Mammary epithelial cell (primary cell): ENCODE measurements at regions of chr22 and their contacts with region 1.

Region 1: GRCh38 chr22:18001040-18001893 is 23.1 kb downstream of the MICAL3 start:
- DNase-seq: peak; percentile 95
- H3K4me3 ChIP-seq: peak overlapping the region; percentile 55 to 83 (median 79)
- H3K27ac ChIP-seq: peak overlapping the region; percentile 78
- H3K4me1 ChIP-seq: peaks cover 29% of the 10 kb centered on the region
- H3K27me3 ChIP-seq: no peaks in the 10 kb centered on the region
- CTCF ChIP-seq: peak; percentile 13 to 60

Region 2: GRCh38 chr22:17830043-17830961 is 171.0 kb before region 1 on chr22:
- CTCF ChIA-PET with region 1: no interaction called
- dilution Hi-C with region 1: no loop called
- in situ Hi-C with region 1: no loop called
- intact Hi-C with region 1: loop called (anchors 1 kb)
- DNase-seq: peak; percentile 79
- H3K4me3 ChIP-seq: no peak overlapping the region
- H3K27ac ChIP-seq: no peak overlapping the region
- H3K4me1 ChIP-seq: peaks cover 11% of the 10 kb centered on the region
- H3K27me3 ChIP-seq: no peaks in the 10 kb centered on the region
- CTCF ChIP-seq: peak; percentile 100

Region 3: DNA sequence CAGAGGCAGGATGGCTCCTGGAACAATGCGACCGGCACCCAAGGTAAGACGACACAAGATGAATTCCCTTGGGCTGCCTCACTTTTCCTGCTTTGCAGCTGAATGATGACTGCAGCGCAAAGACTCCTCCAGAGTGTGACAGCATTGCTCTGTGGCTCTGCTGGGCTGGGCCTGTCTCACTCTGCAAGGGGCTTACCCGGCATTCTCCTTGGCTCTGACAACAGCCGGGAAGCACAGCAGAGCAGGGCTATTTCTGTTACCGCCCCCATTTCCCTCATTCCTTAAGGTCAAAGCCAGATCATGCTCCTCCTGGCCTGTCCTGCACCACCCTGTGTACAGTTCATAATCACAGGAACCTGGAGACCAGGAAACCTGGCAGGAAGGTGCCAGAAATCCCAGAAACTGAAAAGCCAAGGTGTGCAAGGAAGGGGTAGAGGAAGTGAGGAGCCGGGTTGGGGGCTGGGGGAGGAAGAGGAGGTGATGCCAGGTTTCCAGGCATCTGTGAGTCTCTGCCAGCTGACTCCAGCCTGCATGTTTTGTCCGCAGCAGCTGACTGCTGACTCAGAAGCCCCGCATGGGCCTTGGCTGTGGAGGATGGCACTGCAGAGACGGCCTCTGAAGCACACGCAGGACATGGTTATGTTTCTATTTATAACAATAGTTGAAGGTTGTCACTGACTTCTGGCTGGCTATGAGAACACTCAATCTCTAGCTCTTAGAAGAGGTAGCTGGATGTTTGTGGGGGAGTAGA is 90.5 kb before region 1 on chr22:
- CTCF ChIA-PET with region 1: no interaction called
- dilution Hi-C with region 1: no loop called
- in situ Hi-C with region 1: no loop called
- intact Hi-C with region 1: loop called (anchors 1 kb)
- DNase-seq: peak; percentile 70
- H3K4me3 ChIP-seq: no peak overlapping the region
- H3K27ac ChIP-seq: peak overlapping the region; percentile 14
- H3K4me1 ChIP-seq: peaks cover 21% of the 10 kb centered on the region
- H3K27me3 ChIP-seq: no peaks in the 10 kb centered on the region
- CTCF ChIP-seq: peak; percentile 36 to 57

Region 4: DNA sequence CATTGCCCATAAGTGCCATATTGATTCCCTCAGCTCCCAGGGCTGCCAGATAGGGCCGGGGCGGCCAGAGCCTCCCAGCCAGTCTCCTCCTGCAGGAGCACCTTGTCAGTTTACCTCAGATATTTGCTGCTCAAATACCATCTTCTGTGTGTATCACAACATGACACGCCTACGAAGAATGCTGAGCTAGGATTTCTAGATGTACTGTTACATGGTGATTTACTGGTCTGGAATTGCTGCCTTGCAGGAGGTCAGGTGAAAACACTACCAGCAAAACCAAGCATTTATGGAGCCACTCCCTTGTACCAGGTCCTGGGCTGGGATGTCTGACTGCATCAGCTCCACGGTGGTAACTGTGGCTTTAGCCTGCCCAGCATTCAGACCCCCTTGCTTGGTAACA is 11.3 kb after region 1 on chr22:
- CTCF ChIA-PET with region 1: no interaction called
- dilution Hi-C with region 1: no loop called
- in situ Hi-C with region 1: no loop called
- intact Hi-C with region 1: loop called (anchors 1 kb)
- DNase-seq: peak; percentile 82
- H3K4me3 ChIP-seq: no peak overlapping the region
- H3K27ac ChIP-seq: no peak overlapping the region
- H3K4me1 ChIP-seq: peaks cover 20% of the 10 kb centered on the region
- H3K27me3 ChIP-seq: no peaks in the 10 kb centered on the region
- CTCF ChIP-seq: no peak

Region 5: DNA sequence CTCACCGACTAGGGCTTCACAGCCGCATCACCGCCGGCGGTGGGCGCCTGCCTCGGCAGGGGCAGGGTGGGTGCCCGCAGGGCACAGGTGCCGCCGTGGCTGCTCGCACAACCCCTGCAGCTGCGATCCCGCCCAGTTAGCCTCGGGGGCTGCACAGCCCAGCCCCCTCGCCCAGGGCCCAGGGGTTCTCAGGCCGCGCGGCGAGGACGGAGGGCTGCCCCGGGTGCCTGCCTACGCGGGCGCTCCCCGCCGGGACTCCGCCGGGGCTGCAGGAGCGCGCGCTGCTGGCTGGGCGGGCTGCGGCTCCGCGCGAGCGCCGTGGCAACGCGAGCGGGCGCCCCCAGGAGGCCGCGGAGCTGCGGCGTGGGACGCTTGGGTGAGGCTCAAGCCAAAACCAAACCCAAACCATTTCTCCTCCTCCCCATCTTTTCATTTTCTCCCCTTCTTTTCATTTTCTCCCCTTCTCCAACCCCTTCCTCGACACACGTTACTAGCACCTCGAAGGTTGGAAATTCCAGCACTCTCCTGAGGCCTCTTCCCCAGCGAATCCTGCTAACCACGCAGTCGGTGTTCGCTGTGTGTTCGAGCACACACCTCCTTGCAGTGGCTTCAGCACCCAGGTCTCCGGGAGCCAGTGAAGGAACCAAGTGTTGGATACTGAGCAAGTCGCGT is 23.1 kb after region 1 on chr22 and contains the start of gene MICAL3:
- CTCF ChIA-PET with region 1: no interaction called
- dilution Hi-C with region 1: no loop called
- in situ Hi-C with region 1: no loop called
- intact Hi-C with region 1: loop called (anchors 1 kb)
- DNase-seq: peak; percentile 68
- H3K4me3 ChIP-seq: peak within 1 kb of the TSS; percentile 67 to 74 (median 70)
- H3K27ac ChIP-seq: peak within 1 kb of the TSS; percentile 80
- H3K4me1 ChIP-seq: peaks cover 41% of the 10 kb centered on the region
- H3K27me3 ChIP-seq: no peaks in the 10 kb centered on the region
- CTCF ChIP-seq: peak; percentile 45 to 62
- total RNA-seq, gene MICAL3: 67.2 to 102 TPM

Region 6: GRCh38 chr22:18060646-18061620 is 59.7 kb after region 1 on chr22:
- CTCF ChIA-PET with region 1: no interaction called
- dilution Hi-C with region 1: no loop called
- in situ Hi-C with region 1: no loop called
- intact Hi-C with region 1: loop called (anchors 1 kb)
- DNase-seq: peak; percentile 90
- H3K4me3 ChIP-seq: no peak overlapping the region
- H3K27ac ChIP-seq: peak overlapping the region; percentile 57
- H3K4me1 ChIP-seq: peaks cover 70% of the 10 kb centered on the region
- H3K27me3 ChIP-seq: no peaks in the 10 kb centered on the region
- CTCF ChIP-seq: no peak

Region 7: DNA sequence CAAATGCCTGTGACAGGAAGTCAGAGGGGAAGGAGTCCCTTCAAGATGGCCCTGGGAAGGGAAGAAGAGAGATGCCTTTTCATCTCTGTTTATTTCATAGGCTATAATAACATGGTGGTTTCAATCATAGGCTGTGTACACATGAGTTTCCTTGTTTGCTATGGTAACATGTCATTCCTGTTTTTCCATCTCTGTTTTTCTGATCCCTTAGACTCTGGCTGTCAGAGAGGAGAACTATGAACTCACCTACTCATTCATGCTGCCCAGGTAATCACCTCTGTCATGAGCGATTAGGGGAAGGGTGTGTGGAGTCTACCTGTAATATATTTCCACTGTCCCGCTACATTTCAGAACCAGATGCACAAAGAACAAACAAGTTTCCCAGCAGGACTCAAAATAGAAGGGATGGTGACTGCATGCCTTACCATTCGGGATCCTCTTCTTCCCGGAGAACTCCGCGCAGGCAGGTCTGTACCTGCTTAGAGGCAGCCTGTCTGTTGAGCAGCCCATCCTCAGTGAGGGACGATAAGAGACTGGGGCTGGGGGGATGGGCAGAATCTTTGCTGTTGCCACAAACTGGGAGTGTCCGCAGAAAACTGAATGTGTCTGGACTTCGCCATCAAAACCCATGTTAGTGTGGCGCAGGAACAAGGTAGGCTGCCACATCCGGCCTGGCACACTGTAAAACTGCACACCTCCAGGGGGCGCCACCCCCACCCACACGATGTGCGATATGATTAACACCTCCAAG is 69.5 kb after region 1 on chr22:
- CTCF ChIA-PET with region 1: interaction called, 12 read pairs
- dilution Hi-C with region 1: no loop called
- in situ Hi-C with region 1: loop called (anchors 5 to 10 kb)
- intact Hi-C with region 1: no loop called
- DNase-seq: peak; percentile 79
- H3K4me3 ChIP-seq: no peak overlapping the region
- H3K27ac ChIP-seq: peak overlapping the region; percentile 44
- H3K4me1 ChIP-seq: peaks cover 29% of the 10 kb centered on the region
- H3K27me3 ChIP-seq: no peaks in the 10 kb centered on the region
- CTCF ChIP-seq: peak; percentile 61 to 68